Vagina (tissue), 2 donors: ENCODE measurements at regions of chr14 and their contacts with region 1.

Region 1: DNA sequence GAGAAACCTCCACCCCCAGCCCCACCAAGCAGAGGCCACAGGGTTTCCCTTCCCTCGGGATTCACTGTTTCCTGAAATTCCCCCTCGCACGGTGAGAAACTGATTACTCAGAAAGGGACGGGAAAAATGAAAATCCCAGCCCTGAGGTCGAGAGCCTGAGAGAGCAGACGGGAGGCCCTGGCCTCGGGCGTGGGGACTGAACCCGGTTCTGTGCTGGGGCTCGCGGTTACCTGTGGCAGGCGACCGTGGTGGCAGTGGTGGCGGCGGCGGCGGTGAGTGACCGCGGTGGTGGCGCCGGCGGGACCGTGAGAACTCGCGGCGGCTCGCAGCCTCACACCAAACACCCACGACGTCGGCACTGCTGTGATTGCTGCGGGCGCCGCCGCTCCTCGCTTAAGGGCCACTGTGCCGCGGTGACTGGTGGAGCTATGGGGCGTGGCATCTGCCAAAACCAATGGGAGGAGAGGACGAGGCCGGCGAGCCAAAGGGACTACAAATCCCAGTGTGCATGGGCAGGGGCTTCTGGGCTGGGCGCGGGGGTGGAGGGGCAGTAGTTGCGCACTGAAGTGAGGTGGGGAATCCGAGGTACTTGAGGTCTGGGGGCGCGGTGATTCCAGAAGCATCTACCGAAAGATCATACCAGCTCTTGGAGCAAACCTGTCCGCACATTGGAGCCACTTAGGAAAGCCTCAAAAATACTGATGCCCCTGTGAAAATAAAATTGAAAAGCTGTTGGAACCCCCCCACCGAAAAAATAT is at the start of gene LGMN:
- DNase-seq: peak in 1 of 2 donors; percentile 97
- H3K4me3 ChIP-seq: peak within 1 kb of the TSS; percentile 80 to 92
- H3K27ac ChIP-seq: peak within 1 kb of the TSS; percentile 90
- H3K4me1 ChIP-seq: peaks cover 13% of the 10 kb centered on the region
- H3K27me3 ChIP-seq: no peaks in the 10 kb centered on the region
- CTCF ChIP-seq: no peak
- POLR2A ChIP-seq: peak in 1 of 2 donors; percentile 94
- total RNA-seq, gene LGMN: 61.6 TPM

Region 2: DNA sequence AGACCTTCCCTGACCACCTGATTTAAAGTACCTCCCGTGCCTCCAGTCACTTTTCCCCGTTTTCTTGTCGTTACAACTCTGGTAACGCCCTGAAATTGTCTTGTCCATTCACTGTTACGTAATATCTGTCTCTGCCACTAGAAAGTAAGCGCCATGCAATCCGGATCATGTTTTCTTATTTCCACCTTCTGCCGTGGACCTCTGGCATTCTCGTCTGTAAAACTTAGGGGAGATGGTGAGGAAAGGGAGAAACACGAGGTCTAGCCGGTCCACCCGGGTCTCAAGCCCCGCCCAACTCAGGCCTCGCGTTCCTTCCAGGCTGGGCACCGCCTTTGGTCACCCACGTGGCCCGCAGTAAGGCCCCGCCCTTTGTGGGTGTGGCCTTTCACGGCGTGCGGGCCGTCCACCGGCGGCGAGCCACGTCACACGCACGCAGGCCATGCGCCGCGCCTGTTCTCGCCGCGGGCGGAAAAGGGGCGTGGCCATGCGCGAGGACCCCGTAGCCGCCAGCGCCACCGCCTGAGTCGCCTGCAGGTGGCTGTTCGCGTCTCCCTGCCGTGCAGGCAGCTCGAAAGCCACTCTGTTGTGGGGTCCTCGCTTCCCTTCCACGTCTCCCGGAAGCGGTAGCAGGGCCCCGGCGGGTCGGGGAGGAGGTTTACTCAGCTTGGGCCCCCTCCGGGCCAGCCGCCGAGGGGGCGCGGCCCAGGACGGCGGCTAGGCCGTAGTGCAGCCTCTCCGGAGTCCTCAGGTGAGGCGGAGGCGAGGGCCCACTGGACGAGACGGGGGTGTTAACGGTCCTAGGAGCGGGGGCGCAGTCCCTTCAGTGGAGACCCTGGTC is 45.5 kb after region 1 on chr14 and contains the start of gene GOLGA5:
- intact Hi-C with region 1: loop called (anchors 5 kb)
- DNase-seq: peak; percentile 99
- H3K4me3 ChIP-seq: peak within 1 kb of the TSS; percentile 89 to 92
- H3K27ac ChIP-seq: peak within 1 kb of the TSS; percentile 84
- H3K4me1 ChIP-seq: peaks cover 26% of the 10 kb centered on the region
- H3K27me3 ChIP-seq: no peaks in the 10 kb centered on the region
- CTCF ChIP-seq: peak in 1 of 3 experiments; percentile 22
- POLR2A ChIP-seq: peak in 1 of 2 donors; percentile 36
- total RNA-seq, gene GOLGA5: 30.0 TPM